ENCODE measurements at regions of chr12 and their contacts with region 1.

Region 1: GRCh38 chr12:114508529-114509129 is 102.7 kb upstream of the TBX5 start:
- DNase-seq: peak; percentile 11 to 71 (median 41)
- ATAC-seq: peak; percentile 58
- H3K4me3 ChIP-seq: no peak overlapping the region
- H3K4me3 Mint-ChIP-seq: no peak overlapping the region
- H3K27ac ChIP-seq: no peak overlapping the region
- H3K27ac Mint-ChIP-seq: no peak overlapping the region
- H3K4me1 ChIP-seq: no peaks in the 10 kb centered on the region
- H3K4me1 Mint-ChIP-seq: no peaks in the 10 kb centered on the region
- H3K27me3 ChIP-seq: peaks cover 0 to under 1% of the 10 kb centered on the region in 2 experiments
- H3K27me3 Mint-ChIP-seq: peaks cover 25% of the 10 kb centered on the region
- CTCF ChIP-seq: peak; percentile 78

Region 2: GRCh38 chr12:113980537-113981337 is 527.9 kb before region 1 on chr12:
- CTCF ChIA-PET with region 1: no interaction called
- POLR2A ChIA-PET with region 1: no interaction called
- intact Hi-C with region 1: loop called (anchors 1 to 5 kb)
- DNase-seq: peak in 4 of 14 experiments; percentile 30 to 72 (median 56)
- ATAC-seq: no peak
- H3K4me3 ChIP-seq: no peak overlapping the region
- H3K4me3 Mint-ChIP-seq: no peak overlapping the region
- H3K27ac ChIP-seq: no peak overlapping the region
- H3K27ac Mint-ChIP-seq: no peak overlapping the region
- H3K4me1 ChIP-seq: peaks cover 3% of the 10 kb centered on the region
- H3K4me1 Mint-ChIP-seq: no peaks in the 10 kb centered on the region
- H3K27me3 ChIP-seq: peaks cover 13% of the 10 kb centered on the region in 2 experiments
- H3K27me3 Mint-ChIP-seq: peaks cover 52% of the 10 kb centered on the region
- CTCF ChIP-seq: peak; percentile 67

Region 3: GRCh38 chr12:114625294-114625851 is 116.7 kb after region 1 on chr12:
- CTCF ChIA-PET with region 1: no interaction called
- POLR2A ChIA-PET with region 1: no interaction called
- intact Hi-C with region 1: no loop called
- DNase-seq: peak in 6 of 14 experiments; percentile 0 to 27 (median 10)
- ATAC-seq: no peak
- H3K4me3 ChIP-seq: no peak overlapping the region
- H3K4me3 Mint-ChIP-seq: no peak overlapping the region
- H3K27ac ChIP-seq: no peak overlapping the region
- H3K27ac Mint-ChIP-seq: no peak overlapping the region
- H3K4me1 ChIP-seq: no peaks in the 10 kb centered on the region
- H3K4me1 Mint-ChIP-seq: no peaks in the 10 kb centered on the region
- H3K27me3 ChIP-seq: peaks cover 2 to 4% of the 10 kb centered on the region in 2 experiments
- H3K27me3 Mint-ChIP-seq: peaks cover 5% of the 10 kb centered on the region
- CTCF ChIP-seq: peak; percentile 18

Measured in CD4-positive, alpha-beta T cell (primary cell).